Activated T-helper 2 cell treated with anti-CD3 and anti-CD28 coated beads, Interferon-gamma antibody, Interleukin-2, Interleukin-4, amounts not matched to agents 10 μg/mL and 5 μg/mL and 100 μg/mL, durations not matched to agents 14 hours and 24 hours and 36 hours (primary cell): ENCODE measurements at regions of chr9 and their contacts with region 1.

Region 1: DNA sequence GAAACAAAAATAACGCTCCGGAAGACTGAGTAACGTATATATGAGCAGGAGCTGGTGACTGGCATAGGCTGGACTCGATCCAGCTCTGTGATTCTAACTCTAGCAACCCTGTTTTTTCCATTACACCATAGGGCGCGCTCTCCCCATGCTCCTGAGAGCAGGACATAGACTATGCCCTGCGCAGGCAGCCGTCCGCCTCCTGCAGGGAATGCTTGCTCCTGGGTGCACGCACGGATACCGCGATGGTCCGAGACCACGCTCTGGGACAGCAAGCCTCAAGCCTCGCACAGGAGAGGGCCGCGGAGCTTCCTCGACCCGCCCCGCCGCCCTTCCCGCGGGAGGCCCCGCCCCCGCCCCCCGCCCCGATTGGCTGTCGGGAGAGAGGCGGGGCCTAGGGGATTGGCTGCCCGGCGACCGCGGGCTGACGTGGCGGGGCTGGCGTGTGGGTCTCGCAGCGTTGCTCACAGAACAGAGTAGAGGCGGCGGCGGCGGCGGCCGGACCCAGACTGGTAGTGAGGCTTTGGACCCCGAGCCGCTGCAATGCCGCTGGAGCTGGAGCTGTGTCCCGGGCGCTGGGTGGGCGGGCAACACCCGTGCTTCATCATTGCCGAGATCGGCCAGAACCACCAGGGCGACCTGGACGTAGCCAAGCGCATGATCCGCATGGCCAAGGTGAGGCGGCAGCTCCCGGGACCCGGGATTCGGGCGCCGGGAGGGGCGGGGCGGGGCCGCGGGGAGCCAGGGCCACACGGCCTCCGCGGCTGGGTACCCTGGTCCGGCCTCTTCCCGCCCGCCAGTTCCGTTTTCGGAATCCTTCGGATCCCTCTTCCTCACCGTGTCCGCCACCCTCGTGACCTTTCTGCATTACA is at the start of gene NANS:
- DNase-seq: peak; percentile 89
- H3K4me3 Mint-ChIP-seq: peak within 1 kb of the TSS; percentile 88
- H3K27ac Mint-ChIP-seq: peak within 1 kb of the TSS; percentile 91
- H3K4me1 Mint-ChIP-seq: peaks cover 40% of the 10 kb centered on the region
- H3K27me3 Mint-ChIP-seq: no peaks in the 10 kb centered on the region
- total RNA-seq, gene NANS: 63.4 and 64.7 TPM in 2 replicates

Region 2: GRCh38 chr9:97703437-97704344 is 352.8 kb before region 1 on chr9:
- intact Hi-C with region 1: loop called (anchors 5 kb)
- DNase-seq: no peak
- H3K4me3 Mint-ChIP-seq: no peak overlapping the region
- H3K27ac Mint-ChIP-seq: peak overlapping the region; percentile 86
- H3K4me1 Mint-ChIP-seq: peaks cover 33% of the 10 kb centered on the region
- H3K27me3 Mint-ChIP-seq: peaks cover 20% of the 10 kb centered on the region

Region 3: GRCh38 chr9:97982683-97983588 is 73.6 kb before region 1 on chr9 and contains the start of gene ANP32B:
- intact Hi-C with region 1: loop called (anchors 2 kb)
- DNase-seq: peak; percentile 93
- H3K4me3 Mint-ChIP-seq: peak within 1 kb of the TSS; percentile 84
- H3K27ac Mint-ChIP-seq: peak within 1 kb of the TSS; percentile 80
- H3K4me1 Mint-ChIP-seq: peaks cover 27% of the 10 kb centered on the region
- H3K27me3 Mint-ChIP-seq: no peaks in the 10 kb centered on the region
- total RNA-seq, gene ANP32B: 307 and 323 TPM in 2 replicates

Region 4: DNA sequence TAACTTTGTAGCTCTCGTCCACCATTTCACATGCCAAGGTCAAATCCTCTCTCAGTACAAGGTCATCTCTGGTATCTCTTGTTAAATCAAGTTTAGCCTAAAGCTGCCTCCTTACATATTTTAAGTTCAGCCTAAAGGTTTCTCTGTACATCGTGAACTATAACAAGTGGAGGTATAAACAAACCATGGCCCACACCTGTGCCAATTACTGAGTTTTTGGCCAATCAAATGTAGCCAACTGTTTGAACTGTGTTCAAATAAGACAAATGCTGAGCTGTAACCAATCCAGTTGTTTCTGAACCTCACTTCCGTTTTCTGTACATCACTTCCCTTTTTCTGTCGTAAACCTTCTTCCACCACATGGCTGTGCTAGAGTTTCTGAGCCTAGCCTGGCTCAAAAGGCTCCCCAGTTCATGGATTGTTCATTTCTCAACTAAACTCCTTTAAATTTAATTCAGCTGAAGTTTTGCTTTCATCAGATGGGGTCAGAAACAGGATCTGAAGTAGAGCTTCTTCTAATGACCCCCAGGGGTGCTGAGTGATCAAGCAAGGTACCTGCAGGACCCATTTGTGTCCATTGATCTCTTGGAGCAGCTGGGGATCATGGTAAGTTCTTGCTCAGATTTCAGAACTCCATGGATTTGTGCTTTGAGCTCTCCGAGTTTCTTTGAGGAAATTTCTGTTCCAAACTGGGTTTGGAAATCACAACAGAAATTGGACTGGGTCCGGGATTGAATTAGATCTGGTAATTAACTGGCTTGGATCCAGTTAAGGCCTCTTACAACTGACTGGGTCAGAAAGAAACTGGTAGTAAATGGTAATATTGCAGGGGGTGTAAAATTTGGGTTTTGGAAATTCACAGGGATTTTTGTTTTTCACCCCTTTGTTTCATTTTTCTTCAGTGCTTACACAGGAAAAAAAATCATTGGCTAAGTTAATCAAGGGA is 11.0 kb before region 1 on chr9:
- intact Hi-C with region 1: loop called (anchors 1 kb)
- DNase-seq: peak; percentile 39
- H3K4me3 Mint-ChIP-seq: peak overlapping the region; percentile 84
- H3K27ac Mint-ChIP-seq: peak overlapping the region; percentile 86
- H3K4me1 Mint-ChIP-seq: peaks cover 28% of the 10 kb centered on the region
- H3K27me3 Mint-ChIP-seq: no peaks in the 10 kb centered on the region

Region 5: GRCh38 chr9:98255578-98256296 is 199.2 kb after region 1 on chr9 and contains the start of gene TBC1D2:
- intact Hi-C with region 1: loop called (anchors 1 kb)
- DNase-seq: peak; percentile 96
- H3K4me3 Mint-ChIP-seq: peak within 1 kb of the TSS; percentile 97
- H3K27ac Mint-ChIP-seq: peak within 1 kb of the TSS; percentile 94
- H3K4me1 Mint-ChIP-seq: peaks cover 23% of the 10 kb centered on the region
- H3K27me3 Mint-ChIP-seq: peaks cover 12% of the 10 kb centered on the region
- total RNA-seq, gene TBC1D2: 1.3 and 1.5 TPM in 2 replicates